Naive thymus-derived CD4-positive, alpha-beta T cell (primary cell): ENCODE measurements at regions of chr1 and their contacts with region 1.

Region 1: DNA sequence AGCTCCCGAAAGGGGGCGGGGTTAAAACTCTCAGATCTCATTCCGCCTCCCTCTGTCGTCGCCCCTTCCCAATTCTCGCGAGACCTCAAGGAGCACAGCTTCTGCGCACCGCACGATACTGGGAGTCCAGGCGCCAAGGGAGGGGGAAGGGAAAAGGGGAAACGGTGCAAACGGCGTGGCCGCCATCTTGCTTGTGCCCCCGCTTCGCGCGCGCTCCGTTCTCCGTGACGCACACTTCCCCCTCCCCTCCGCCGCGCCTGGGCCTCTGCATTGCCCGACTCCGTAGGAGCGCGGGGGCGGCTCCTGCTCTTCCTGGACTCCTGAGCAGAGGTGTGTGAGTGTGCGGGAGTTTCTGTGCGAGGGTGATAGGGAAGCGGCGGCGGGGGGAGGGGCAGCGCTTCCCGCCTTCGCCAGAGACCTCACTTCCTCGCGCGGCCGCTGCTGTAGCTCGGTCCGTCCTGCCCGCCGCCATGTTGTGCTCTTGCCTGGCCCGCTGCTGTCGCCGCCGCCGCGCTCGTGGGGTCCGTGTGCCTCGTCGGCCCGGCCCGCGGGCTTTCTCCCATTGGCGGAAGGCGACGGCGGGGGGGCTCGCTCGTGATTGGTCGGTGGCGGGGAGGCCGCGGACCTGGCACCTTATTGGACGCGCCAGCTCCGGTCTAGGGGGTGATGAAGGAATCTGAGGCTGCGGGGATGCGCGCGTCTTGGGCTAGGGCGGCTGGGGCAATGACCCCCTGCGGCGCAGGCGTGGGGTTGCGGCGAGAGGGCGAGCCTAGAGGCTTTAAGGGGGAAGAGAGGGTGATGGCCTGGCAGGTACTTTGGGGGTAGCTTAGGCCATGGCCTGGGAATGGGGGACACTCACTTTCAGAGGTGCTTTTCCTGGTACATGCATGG is at the start of gene NFYC:
- DNase-seq: peak; percentile 82 to 97 (median 96)
- ATAC-seq: peak; percentile 89
- H3K4me3 ChIP-seq: peak within 1 kb of the TSS; percentile 81
- H3K4me3 Mint-ChIP-seq: peak within 1 kb of the TSS; percentile 91 to 98 (median 95)
- H3K27ac ChIP-seq: peak within 1 kb of the TSS; percentile 99
- H3K27ac Mint-ChIP-seq: peak within 1 kb of the TSS; percentile 91 to 99 (median 97)
- H3K4me1 ChIP-seq: peaks cover 30 to 38% of the 10 kb centered on the region in 2 donors
- H3K4me1 Mint-ChIP-seq: peaks cover 29 to 73% (median 64%) of the 10 kb centered on the region in 7 donors
- H3K27me3 ChIP-seq: no peaks in the 10 kb centered on the region
- H3K27me3 Mint-ChIP-seq: no peaks in the 10 kb centered on the region
- total RNA-seq, gene NFYC: 44.2 to 88.5 (median 73.6) TPM

Region 2: GRCh38 chr1:40161125-40161887 is 530.5 kb before region 1 on chr1 and contains the start of gene RLF:
- CTCF ChIA-PET with region 1: no interaction called
- POLR2A ChIA-PET with region 1: interaction called, 3 read pairs
- intact Hi-C with region 1: loop called in 1 of 2 experiments (anchors 1 kb)
- DNase-seq: peak; percentile 91 to 97 (median 95)
- ATAC-seq: peak; percentile 99
- H3K4me3 ChIP-seq: peak within 1 kb of the TSS; percentile 76
- H3K4me3 Mint-ChIP-seq: no peak within 1 kb of the TSS
- H3K27ac ChIP-seq: peak within 1 kb of the TSS; percentile 88
- H3K27ac Mint-ChIP-seq: peak within 1 kb of the TSS in 2 of 9 donors; percentile 99 to 100
- H3K4me1 ChIP-seq: peaks cover 22 to 25% of the 10 kb centered on the region in 2 donors
- H3K4me1 Mint-ChIP-seq: peaks cover 5 to 19% (median 7%) of the 10 kb centered on the region in 7 donors
- H3K27me3 ChIP-seq: no peaks in the 10 kb centered on the region
- H3K27me3 Mint-ChIP-seq: no peaks in the 10 kb centered on the region
- total RNA-seq, gene RLF: 20.9 to 28.6 (median 24.7) TPM

Region 3: DNA sequence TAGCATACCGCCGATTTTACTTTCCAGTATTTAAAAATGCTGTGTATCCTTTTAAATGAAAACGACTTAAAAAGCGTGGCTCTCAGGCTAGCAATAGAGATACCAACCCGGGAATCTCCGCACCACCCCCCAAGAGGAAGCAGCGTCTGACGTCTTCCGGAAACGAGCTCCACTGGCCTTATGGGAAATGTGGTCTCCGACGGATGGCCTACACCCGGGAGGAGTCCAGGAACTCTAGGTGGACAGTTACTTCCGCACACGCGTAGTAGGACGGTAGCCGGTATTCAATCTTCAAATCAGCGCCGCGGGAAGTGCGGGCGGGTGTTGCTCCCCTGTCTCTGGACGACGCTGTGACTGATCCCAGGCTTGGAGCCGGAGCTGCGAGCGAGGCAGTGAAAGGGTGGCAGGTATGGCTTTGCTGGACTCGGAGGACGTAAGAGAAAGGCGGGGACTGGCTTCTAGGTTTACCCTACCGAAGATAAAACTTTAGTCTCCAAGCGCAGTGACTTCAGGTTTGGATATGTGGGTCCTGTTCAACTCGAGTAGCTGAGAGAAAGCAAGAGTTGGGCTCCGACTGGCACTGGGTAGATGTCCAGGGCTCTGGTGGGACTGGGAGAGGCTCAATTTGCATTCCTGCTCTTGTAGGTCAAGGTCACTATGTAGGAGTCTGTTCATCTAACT is 160.3 kb before region 1 on chr1 and contains the start of gene ZNF684:
- CTCF ChIA-PET with region 1: no interaction called
- POLR2A ChIA-PET with region 1: interaction called, 6 read pairs
- intact Hi-C with region 1: loop called (anchors 5 kb)
- DNase-seq: peak; percentile 57 to 87 (median 81)
- ATAC-seq: peak; percentile 99
- H3K4me3 ChIP-seq: peak within 1 kb of the TSS; percentile 78
- H3K4me3 Mint-ChIP-seq: peak within 1 kb of the TSS; percentile 89 to 100 (median 98)
- H3K27ac ChIP-seq: peak within 1 kb of the TSS; percentile 80
- H3K27ac Mint-ChIP-seq: peak within 1 kb of the TSS; percentile 59 to 96 (median 93)
- H3K4me1 ChIP-seq: peaks cover 14 to 17% of the 10 kb centered on the region in 2 donors
- H3K4me1 Mint-ChIP-seq: peaks cover 22 to 29% (median 25%) of the 10 kb centered on the region in 7 donors
- H3K27me3 ChIP-seq: no peaks in the 10 kb centered on the region
- H3K27me3 Mint-ChIP-seq: peaks cover 4 to 24% (median 17%) of the 10 kb centered on the region in 5 donors
- total RNA-seq, gene ZNF684: 1.3 to 6.6 (median 3.7) TPM

Region 4: GRCh38 chr1:40638097-40639036 is 53.4 kb before region 1 on chr1:
- CTCF ChIA-PET with region 1: no interaction called
- POLR2A ChIA-PET with region 1: no interaction called
- intact Hi-C with region 1: no loop called
- DNase-seq: no peak
- ATAC-seq: no peak
- H3K4me3 ChIP-seq: no peak overlapping the region
- H3K4me3 Mint-ChIP-seq: no peak overlapping the region
- H3K27ac ChIP-seq: no peak overlapping the region
- H3K27ac Mint-ChIP-seq: no peak overlapping the region
- H3K4me1 ChIP-seq: no peaks in the 10 kb centered on the region
- H3K4me1 Mint-ChIP-seq: peaks cover 0 to 14% (median 6%) of the 10 kb centered on the region in 7 donors
- H3K27me3 ChIP-seq: no peaks in the 10 kb centered on the region
- H3K27me3 Mint-ChIP-seq: peaks cover 0 to 5% (median 0%) of the 10 kb centered on the region in 5 donors

Region 5: DNA sequence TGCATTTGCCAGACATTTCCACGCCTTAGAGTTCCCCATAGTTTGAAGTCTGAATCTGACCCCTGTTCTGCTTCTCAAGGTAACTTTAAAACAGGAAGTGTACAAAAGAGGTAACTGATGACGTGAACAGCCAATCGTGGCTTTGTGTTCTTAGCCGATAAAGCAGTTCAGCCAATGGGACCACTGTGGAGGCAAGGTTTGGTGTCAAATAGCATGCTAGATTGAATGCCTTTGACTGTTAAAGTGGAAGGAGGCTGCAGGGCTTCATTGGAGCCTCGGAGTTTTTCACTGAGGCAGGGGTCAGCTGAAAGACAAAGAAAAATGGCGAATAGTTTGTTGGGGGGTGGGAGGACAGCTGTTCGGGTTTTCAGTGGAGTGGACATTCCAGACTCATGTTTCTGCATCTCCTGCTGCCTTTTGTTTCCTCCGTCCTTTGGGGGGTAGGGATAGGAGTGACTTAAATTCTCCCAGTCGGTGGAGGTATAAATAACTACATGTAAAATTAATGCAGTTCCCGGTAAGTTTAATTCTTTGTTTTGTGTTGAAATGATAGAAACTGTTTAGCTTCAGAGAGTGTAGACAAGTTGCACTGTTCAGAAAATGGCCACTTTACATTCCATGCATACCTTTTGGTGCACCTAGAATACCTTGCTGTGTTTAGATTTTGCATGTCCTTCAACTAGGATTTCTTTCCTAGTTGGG is 17.5 kb after region 1 on chr1:
- CTCF ChIA-PET with region 1: interaction called, 10 read pairs
- POLR2A ChIA-PET with region 1: interaction called, 123 read pairs
- intact Hi-C with region 1: loop called (anchors 1 kb)
- DNase-seq: peak; percentile 28 to 91 (median 88)
- ATAC-seq: peak; percentile 97
- H3K4me3 ChIP-seq: peak overlapping the region; percentile 68
- H3K4me3 Mint-ChIP-seq: peak overlapping the region; percentile 90 to 99 (median 94)
- H3K27ac ChIP-seq: peak overlapping the region; percentile 82
- H3K27ac Mint-ChIP-seq: peak overlapping the region; percentile 89 to 98 (median 93)
- H3K4me1 ChIP-seq: peaks cover 41 to 53% of the 10 kb centered on the region in 2 donors
- H3K4me1 Mint-ChIP-seq: peaks cover 40 to 78% (median 71%) of the 10 kb centered on the region in 7 donors
- H3K27me3 ChIP-seq: no peaks in the 10 kb centered on the region
- H3K27me3 Mint-ChIP-seq: no peaks in the 10 kb centered on the region

Region 6: GRCh38 chr1:40796939-40797667 is 105.3 kb after region 1 on chr1:
- CTCF ChIA-PET with region 1: no interaction called
- POLR2A ChIA-PET with region 1: interaction called, 10 read pairs
- intact Hi-C with region 1: loop called in 1 of 2 experiments (anchors 1 kb)
- DNase-seq: no peak
- ATAC-seq: no peak
- H3K4me3 ChIP-seq: peak overlapping the region; percentile 10
- H3K4me3 Mint-ChIP-seq: peak overlapping the region; percentile 51 to 87 (median 66)
- H3K27ac ChIP-seq: no peak overlapping the region
- H3K27ac Mint-ChIP-seq: peak overlapping the region; percentile 32 to 90 (median 70)
- H3K4me1 ChIP-seq: peaks cover 17 to 29% of the 10 kb centered on the region in 2 donors
- H3K4me1 Mint-ChIP-seq: peaks cover 22 to 60% (median 55%) of the 10 kb centered on the region in 7 donors
- H3K27me3 ChIP-seq: no peaks in the 10 kb centered on the region
- H3K27me3 Mint-ChIP-seq: peaks cover 0 to 5% (median 0%) of the 10 kb centered on the region in 5 donors

Region 7: GRCh38 chr1:40818264-40818961 is 126.6 kb after region 1 on chr1:
- CTCF ChIA-PET with region 1: no interaction called
- POLR2A ChIA-PET with region 1: interaction called, 6 read pairs
- intact Hi-C with region 1: loop called (anchors 1 kb)
- DNase-seq: peak; percentile 66 to 90 (median 86)
- ATAC-seq: peak; percentile 98
- H3K4me3 ChIP-seq: peak overlapping the region; percentile 68
- H3K4me3 Mint-ChIP-seq: peak overlapping the region; percentile 76 to 89 (median 83)
- H3K27ac ChIP-seq: peak overlapping the region; percentile 50
- H3K27ac Mint-ChIP-seq: peak overlapping the region; percentile 74 to 89 (median 83)
- H3K4me1 ChIP-seq: peaks cover 0 to 5% of the 10 kb centered on the region in 2 donors
- H3K4me1 Mint-ChIP-seq: peaks cover 0 to 21% (median 11%) of the 10 kb centered on the region in 7 donors
- H3K27me3 ChIP-seq: no peaks in the 10 kb centered on the region
- H3K27me3 Mint-ChIP-seq: peaks cover 0 to 8% (median 0%) of the 10 kb centered on the region in 5 donors

Region 8: DNA sequence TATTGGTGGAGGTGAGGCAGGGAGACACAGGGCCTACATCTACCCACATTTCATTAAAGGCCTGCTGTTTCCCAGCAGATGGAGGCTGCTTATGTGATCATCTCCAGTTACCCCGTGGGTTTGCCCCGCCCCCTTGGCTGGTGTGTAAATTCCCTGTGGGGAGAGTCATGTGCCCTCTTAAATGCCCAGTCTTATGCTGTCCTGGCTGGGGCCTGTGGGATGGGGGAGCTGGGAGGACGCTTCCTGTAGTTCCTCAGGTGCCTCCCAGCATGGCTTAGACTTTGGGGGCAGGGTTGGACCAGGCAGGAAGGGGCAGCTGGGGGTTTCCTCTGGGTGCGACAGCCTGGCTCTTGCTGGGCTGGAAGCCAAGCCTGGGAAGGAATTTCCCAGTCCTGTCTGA is 185.9 kb after region 1 on chr1:
- CTCF ChIA-PET with region 1: no interaction called
- POLR2A ChIA-PET with region 1: no interaction called
- intact Hi-C with region 1: no loop called
- DNase-seq: no peak
- ATAC-seq: peak; percentile 42
- H3K4me3 ChIP-seq: no peak overlapping the region
- H3K4me3 Mint-ChIP-seq: no peak overlapping the region
- H3K27ac ChIP-seq: no peak overlapping the region
- H3K27ac Mint-ChIP-seq: no peak overlapping the region
- H3K4me1 ChIP-seq: peaks cover 5 to 21% of the 10 kb centered on the region in 2 donors
- H3K4me1 Mint-ChIP-seq: peaks cover 4 to 44% (median 10%) of the 10 kb centered on the region in 7 donors
- H3K27me3 ChIP-seq: no peaks in the 10 kb centered on the region
- H3K27me3 Mint-ChIP-seq: peaks cover 2 to 11% (median 9%) of the 10 kb centered on the region in 5 donors